ENCODE measurements at regions of chr6 and their contacts with region 1.

Region 1: DNA sequence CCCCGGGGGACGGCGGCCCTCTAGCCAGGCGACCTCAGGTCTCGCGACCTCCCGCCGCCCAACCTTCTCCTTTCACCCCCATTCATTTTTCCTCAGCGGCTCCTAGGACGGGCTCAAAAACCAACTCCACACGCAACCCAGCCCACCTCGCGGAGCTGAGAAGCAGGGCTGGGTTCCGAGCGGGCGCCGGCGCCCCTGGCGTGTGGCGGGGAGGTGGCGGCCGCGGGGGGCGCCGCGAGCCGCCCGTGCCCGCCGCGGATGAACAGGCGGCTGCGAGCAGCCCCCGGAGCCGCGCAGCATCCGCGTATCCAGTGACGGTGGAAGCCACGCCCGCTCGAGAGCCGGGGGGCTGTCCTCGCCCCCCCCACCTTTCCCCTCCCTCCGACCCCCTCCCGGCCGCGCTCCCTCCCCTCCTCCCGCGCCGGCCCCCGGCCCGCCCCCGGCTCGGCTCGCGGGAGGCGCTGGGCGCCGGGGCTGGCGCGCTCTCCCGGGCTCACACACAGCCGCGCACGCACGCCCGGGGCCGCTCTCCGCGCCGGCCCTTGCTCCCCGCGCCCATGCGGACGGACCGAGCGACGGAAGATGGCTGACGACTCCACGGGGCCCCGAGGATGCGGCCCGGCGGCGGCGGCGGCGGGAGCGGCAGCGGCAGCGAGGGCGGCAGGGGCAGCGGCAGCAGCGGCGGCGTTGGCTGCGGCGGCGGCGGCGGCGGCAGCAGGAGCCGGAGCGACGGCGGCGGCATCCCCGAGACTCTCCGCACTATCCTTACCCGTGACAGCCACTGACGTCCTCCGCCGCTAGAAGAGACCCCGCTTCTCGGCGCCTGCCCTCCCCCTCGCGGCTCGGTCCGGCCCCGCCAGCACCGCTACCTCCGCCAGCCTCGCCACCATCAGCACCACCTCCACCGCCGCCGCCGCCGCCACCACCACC is at the start of gene SOBP:
- DNase-seq: peak; percentile 78 to 90 (median 90)
- ATAC-seq: peak; percentile 64
- H3K4me3 ChIP-seq: peak within 1 kb of the TSS; percentile 91
- H3K27ac ChIP-seq: peak within 1 kb of the TSS; percentile 88
- H3K4me1 ChIP-seq: peaks cover 2% of the 10 kb centered on the region
- H3K27me3 ChIP-seq: no peaks in the 10 kb centered on the region
- total RNA-seq, gene SOBP: 17.5 to 20.6 (median 18.5) TPM

Region 2: GRCh38 chr6:107645800-107646575 is 156.1 kb after region 1 on chr6:
- intact Hi-C with region 1: loop called in 2 of 4 experiments (anchors 5 to 10 kb)
- DNase-seq: peak; percentile 77 to 89 (median 80)
- ATAC-seq: peak; percentile 86 to 94
- H3K4me3 ChIP-seq: no peak overlapping the region
- H3K27ac ChIP-seq: peak overlapping the region; percentile 6
- H3K4me1 ChIP-seq: peaks cover 17% of the 10 kb centered on the region
- H3K27me3 ChIP-seq: no peaks in the 10 kb centered on the region

Region 3: DNA sequence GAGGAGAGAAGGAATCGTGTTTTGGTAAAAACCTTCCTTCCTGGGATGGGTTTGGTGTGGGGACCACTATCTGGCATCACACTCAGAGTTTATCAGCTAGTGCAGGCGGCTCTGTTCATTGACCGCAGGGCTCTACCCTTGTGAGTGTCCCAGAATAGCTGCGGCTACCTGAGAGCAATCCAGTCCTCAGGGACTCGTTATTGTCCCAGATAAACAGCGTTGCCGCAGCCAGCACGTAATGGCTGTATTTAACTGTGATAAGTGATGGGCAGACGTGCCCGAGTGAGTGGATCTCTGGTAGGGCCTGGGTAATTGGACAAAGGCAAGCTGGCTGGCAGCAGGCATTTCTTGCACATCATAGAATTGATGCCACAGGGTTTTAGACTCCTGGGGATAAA is 163.3 kb after region 1 on chr6:
- intact Hi-C with region 1: loop called in 2 of 4 experiments (anchors 5 to 10 kb)
- DNase-seq: peak; percentile 28 to 76 (median 74)
- ATAC-seq: peak; percentile 52 to 79
- H3K4me3 ChIP-seq: no peak overlapping the region
- H3K27ac ChIP-seq: no peak overlapping the region
- H3K4me1 ChIP-seq: peaks cover 6% of the 10 kb centered on the region
- H3K27me3 ChIP-seq: no peaks in the 10 kb centered on the region

Region 4: GRCh38 chr6:107704347-107705013 is 214.6 kb after region 1 on chr6:
- intact Hi-C with region 1: loop called in 1 of 4 experiments (anchors 10 kb)
- DNase-seq: no peak
- ATAC-seq: peak; percentile 40 to 56
- H3K4me3 ChIP-seq: no peak overlapping the region
- H3K27ac ChIP-seq: no peak overlapping the region
- H3K4me1 ChIP-seq: no peaks in the 10 kb centered on the region
- H3K27me3 ChIP-seq: no peaks in the 10 kb centered on the region

Measured in right cardiac atrium (tissue), 5 donors.